CD8-positive, alpha-beta T cell (primary cell): ENCODE measurements at regions of chr2 and their contacts with region 1.

Region 1: DNA sequence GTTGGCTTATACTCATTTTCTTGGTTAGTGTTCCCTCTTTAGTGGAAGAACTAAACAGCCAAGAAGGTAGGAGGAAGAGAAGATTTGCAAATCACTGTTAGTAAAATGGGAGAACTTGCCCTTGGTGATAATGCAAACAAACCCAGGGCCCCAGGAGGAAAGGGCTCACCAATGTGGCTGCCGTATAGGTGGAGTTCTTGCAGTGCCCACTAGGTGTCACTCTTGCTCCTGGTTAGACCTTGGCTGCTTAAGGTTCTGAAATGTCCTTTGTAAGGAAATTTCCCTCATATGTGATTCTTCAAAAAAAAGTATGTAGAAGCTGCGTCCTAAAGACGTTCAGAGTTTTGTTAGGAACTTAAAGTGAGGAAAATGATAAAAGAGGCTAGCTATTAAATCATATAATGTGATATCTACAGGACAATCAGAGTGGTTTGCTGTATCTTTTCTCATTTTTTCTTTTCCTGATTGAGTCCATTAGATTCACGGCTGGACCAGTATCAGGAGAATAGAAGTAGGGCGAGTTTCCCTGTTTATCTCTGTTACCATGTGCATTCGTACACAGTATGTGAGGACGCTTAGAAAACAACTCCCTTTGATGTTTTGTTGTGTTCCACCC is 48.6 kb downstream of the RPIA start:
- DNase-seq: peak; percentile 48 to 80 (median 71)
- ATAC-seq: peak; percentile 92
- H3K4me3 ChIP-seq: no peak overlapping the region
- H3K4me3 Mint-ChIP-seq: no peak overlapping the region
- H3K27ac ChIP-seq: no peak overlapping the region
- H3K27ac Mint-ChIP-seq: peak overlapping the region; percentile 52
- H3K4me1 ChIP-seq: no peaks in the 10 kb centered on the region
- H3K4me1 Mint-ChIP-seq: peaks cover 7% of the 10 kb centered on the region
- H3K27me3 ChIP-seq: no peaks in the 10 kb centered on the region
- H3K27me3 Mint-ChIP-seq: no peaks in the 10 kb centered on the region
- CTCF ChIP-seq: peak; percentile 86

Region 2: GRCh38 chr2:88753833-88754584 is 13.9 kb after region 1 on chr2:
- CTCF ChIA-PET with region 1: interaction called, 23 read pairs
- POLR2A ChIA-PET with region 1: no interaction called
- intact Hi-C with region 1: no loop called
- DNase-seq: peak in 6 of 9 experiments; percentile 9 to 66 (median 36)
- ATAC-seq: peak; percentile 81
- H3K4me3 ChIP-seq: no peak overlapping the region
- H3K4me3 Mint-ChIP-seq: peak overlapping the region; percentile 10
- H3K27ac ChIP-seq: peak overlapping the region; percentile 28 to 51
- H3K27ac Mint-ChIP-seq: peak overlapping the region; percentile 90
- H3K4me1 ChIP-seq: peaks cover 30% of the 10 kb centered on the region
- H3K4me1 Mint-ChIP-seq: peaks cover 51% of the 10 kb centered on the region
- H3K27me3 ChIP-seq: no peaks in the 10 kb centered on the region
- H3K27me3 Mint-ChIP-seq: no peaks in the 10 kb centered on the region
- CTCF ChIP-seq: no peak

Region 3: GRCh38 chr2:88765154-88765900 is 25.2 kb after region 1 on chr2:
- CTCF ChIA-PET with region 1: interaction called, 3 read pairs
- POLR2A ChIA-PET with region 1: no interaction called
- intact Hi-C with region 1: loop called in 1 of 2 experiments (anchors 1 kb)
- DNase-seq: peak in 7 of 9 experiments; percentile 19 to 51 (median 37)
- ATAC-seq: peak; percentile 62
- H3K4me3 ChIP-seq: peak overlapping the region; percentile 13 to 30
- H3K4me3 Mint-ChIP-seq: peak overlapping the region; percentile 86
- H3K27ac ChIP-seq: no peak overlapping the region
- H3K27ac Mint-ChIP-seq: peak overlapping the region; percentile 83
- H3K4me1 ChIP-seq: no peaks in the 10 kb centered on the region
- H3K4me1 Mint-ChIP-seq: peaks cover 12% of the 10 kb centered on the region
- H3K27me3 ChIP-seq: no peaks in the 10 kb centered on the region
- H3K27me3 Mint-ChIP-seq: peaks cover 17% of the 10 kb centered on the region
- CTCF ChIP-seq: no peak

Region 4: DNA sequence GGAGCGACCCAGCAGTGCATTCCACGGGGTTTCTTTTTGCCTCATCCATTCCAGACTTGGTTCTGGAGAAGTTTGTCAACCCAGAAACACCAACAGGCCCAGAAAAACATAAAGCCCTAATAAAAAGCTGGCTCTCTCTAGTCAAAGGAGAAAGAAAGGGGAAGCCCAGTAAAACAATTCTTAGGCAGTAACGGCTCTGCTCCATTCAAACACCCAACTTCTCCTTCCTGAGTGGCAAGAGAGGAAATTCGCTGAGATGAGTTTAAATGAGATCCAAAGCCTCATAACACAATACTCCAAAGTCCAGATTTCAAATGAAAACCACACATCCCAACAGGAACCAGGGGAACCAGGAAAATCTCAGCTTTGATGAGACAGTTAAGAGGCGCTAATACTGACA is 131.2 kb after region 1 on chr2:
- CTCF ChIA-PET with region 1: interaction called, 3 read pairs
- POLR2A ChIA-PET with region 1: no interaction called
- intact Hi-C with region 1: loop called in 1 of 2 experiments (anchors 5 kb)
- DNase-seq: no peak
- ATAC-seq: no peak
- H3K4me3 ChIP-seq: no peak overlapping the region
- H3K4me3 Mint-ChIP-seq: no peak overlapping the region
- H3K27ac ChIP-seq: no peak overlapping the region
- H3K27ac Mint-ChIP-seq: no peak overlapping the region
- H3K4me1 ChIP-seq: no peaks in the 10 kb centered on the region
- H3K4me1 Mint-ChIP-seq: peaks cover 11% of the 10 kb centered on the region
- H3K27me3 ChIP-seq: peaks cover 0 to 5% of the 10 kb centered on the region in 2 experiments
- H3K27me3 Mint-ChIP-seq: peaks cover 8% of the 10 kb centered on the region
- CTCF ChIP-seq: no peak

Region 5: DNA sequence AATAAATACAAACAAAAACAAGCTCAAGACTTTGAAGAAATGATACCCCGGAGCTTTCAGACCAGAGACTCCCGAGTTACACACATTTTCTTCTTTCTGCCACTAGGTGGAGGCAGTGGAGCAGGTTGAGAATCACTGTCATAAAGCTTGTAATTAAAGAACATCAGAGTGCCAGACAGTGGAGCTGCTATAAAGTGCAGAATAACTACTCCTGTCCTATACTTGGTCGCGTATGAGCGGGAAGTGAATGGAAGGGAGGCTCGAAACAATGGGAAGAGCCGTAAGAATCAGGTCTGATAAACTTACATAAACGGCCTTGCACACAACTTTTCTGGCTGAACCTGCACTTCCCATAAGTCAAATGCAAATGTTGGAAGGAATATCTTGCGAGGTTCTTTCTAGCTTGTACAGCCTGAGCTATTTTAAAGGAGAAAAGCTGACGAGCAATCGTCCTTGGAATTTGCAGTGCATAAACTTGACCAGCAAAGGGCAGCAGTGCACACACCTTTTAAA is 140.4 kb after region 1 on chr2:
- CTCF ChIA-PET with region 1: interaction called, 3 read pairs
- POLR2A ChIA-PET with region 1: no interaction called
- intact Hi-C with region 1: loop called (anchors 1 to 5 kb)
- DNase-seq: peak in 4 of 9 experiments; percentile 22 to 64 (median 40)
- ATAC-seq: peak; percentile 62
- H3K4me3 ChIP-seq: no peak overlapping the region
- H3K4me3 Mint-ChIP-seq: no peak overlapping the region
- H3K27ac ChIP-seq: no peak overlapping the region
- H3K27ac Mint-ChIP-seq: no peak overlapping the region
- H3K4me1 ChIP-seq: no peaks in the 10 kb centered on the region
- H3K4me1 Mint-ChIP-seq: peaks cover 3% of the 10 kb centered on the region
- H3K27me3 ChIP-seq: no peaks in the 10 kb centered on the region
- H3K27me3 Mint-ChIP-seq: no peaks in the 10 kb centered on the region
- CTCF ChIP-seq: peak; percentile 68